Activated CD8-positive, alpha-beta memory T cell treated with anti-CD3 and anti-CD28 coated beads, Interleukin-2, amount 10 ng/mL, durations not matched to agents 7 days and 5 days (primary cell): ENCODE measurements at regions of chr12 and their contacts with region 1.

Region 1: GRCh38 chr12:26845057-26845666 is 12.2 kb upstream of the ITPR2 start:
- DNase-seq: no peak
- ATAC-seq: no peak
- H3K4me3 Mint-ChIP-seq: no peak overlapping the region
- H3K27ac Mint-ChIP-seq: no peak overlapping the region
- H3K4me1 Mint-ChIP-seq: peaks cover 3% of the 10 kb centered on the region
- H3K27me3 Mint-ChIP-seq: peaks cover 16% of the 10 kb centered on the region

Region 2: DNA sequence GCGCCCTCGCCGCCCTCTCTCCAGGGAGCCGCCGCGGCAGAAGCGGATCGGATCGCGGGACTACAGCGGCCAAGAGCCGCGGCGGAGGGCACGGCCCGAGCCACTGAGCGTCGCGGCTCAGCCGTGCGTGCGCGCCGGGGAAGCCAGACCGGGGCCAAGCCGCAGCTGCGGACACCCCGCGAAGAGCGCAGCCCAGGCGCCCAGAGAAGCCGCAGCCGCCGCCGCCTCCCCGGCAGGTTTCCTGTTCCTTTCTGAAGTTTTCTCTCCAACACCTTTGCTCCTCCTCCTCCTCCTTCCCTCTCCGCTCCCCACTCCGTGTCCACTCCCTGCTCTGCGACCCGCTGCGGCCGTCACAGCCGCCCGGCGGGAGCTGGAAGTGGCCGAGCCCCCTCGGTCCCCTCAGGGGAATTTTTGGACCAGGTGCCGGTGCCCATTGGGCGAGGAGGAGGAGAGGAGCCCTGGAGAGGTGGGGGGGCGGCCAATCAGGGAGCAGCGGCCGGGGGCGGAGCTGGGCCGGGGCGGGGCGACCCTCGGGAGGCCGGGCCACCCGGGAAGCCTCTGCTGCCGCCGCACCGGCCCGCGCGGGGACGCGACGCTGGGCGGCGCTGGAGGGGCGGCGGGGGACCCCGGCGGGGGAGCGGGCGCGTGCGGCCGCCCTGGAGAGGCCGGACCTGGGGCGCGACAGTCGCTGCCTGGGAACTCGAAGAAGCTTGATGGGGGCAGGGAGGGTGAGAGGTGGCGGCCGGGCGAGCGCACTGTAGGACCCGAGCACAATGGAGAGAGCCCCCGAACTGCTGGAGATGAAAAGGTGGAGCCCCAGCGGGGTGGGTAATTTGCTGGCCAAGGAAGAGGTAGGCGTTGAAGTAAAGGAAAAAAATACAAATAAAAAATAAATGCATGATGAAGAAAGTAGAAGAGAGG is 12.1 kb before region 1 on chr12 and contains the start of gene ITPR2:
- CTCF ChIA-PET with region 1: interaction called, 19 read pairs
- DNase-seq: peak; percentile 95
- ATAC-seq: peak; percentile 92
- H3K4me3 Mint-ChIP-seq: peak within 1 kb of the TSS; percentile 94
- H3K27ac Mint-ChIP-seq: peak within 1 kb of the TSS; percentile 99
- H3K4me1 Mint-ChIP-seq: peaks cover 36% of the 10 kb centered on the region
- H3K27me3 Mint-ChIP-seq: no peaks in the 10 kb centered on the region
- total RNA-seq, gene ITPR2: 31.1 to 37.7 TPM